ENCODE measurements at regions of chr13 and their contacts with region 1.

Region 1: DNA sequence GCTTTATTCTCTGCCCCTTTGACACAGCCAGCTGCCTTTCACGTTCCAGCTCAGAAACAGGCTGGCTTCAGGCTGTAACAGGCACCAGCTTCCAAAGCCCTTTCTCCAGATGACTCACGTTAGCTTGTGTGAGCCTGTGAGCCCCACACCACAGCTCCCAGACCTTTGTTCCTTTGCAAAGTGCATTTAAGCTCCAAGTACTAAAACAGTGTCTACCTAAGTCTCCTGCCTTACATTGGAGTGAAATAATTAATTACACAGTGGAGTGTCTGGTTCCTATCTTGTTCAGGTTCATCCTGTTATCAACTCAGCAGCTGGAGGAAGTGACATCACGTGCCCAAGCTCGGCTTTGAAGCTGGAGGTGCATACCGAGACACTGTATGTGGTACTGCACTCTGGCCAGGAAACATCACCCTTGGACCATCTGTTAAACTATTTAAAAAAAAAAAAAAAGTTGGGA is 475.8 kb downstream of the FOXO1 start:
- DNase-seq: peak; percentile 44 to 92 (median 74)
- ATAC-seq: peak; percentile 45
- H3K4me3 ChIP-seq: no peak overlapping the region
- H3K4me3 Mint-ChIP-seq: peak overlapping the region; percentile 80
- H3K27ac ChIP-seq: peak overlapping the region; percentile 60 to 71
- H3K27ac Mint-ChIP-seq: peak overlapping the region; percentile 99
- H3K4me1 ChIP-seq: peaks cover 65% of the 10 kb centered on the region
- H3K4me1 Mint-ChIP-seq: peaks cover 90% of the 10 kb centered on the region
- H3K27me3 ChIP-seq: no peaks in the 10 kb centered on the region
- H3K27me3 Mint-ChIP-seq: no peaks in the 10 kb centered on the region
- CTCF ChIP-seq: no peak

Region 2: DNA sequence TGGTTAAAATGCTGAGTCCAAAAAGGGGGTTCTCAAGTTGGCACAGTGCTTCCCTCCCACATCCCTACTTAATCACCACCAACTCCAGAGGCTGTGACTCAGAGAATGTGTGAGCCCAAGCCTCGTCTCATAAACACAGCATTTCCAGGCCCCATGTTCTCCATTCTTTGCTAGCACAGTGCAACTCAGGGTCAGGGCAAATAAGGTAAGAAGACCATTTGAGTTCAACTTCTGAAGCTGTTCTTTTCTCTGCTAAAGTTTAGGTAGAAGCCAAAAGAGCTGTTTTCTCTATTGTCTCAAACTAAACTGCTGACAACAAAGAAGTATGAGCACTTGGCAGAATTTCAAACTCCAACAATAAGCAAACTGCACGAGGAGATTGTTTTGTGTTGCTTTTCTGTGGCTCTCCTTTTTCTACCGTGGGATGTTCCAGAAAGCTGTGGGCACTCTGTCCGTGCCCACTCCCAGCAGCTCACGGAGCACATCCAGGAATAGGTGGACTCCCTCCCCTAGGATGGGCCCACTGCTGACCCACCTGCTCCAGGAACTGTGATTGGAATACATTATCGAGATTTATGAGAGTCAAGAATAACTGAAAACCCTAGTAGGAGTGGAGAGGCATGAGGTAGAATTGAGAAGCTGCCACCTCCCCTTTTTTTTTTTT is 40.9 kb before region 1 on chr13:
- CTCF ChIA-PET with region 1: no interaction called
- POLR2A ChIA-PET with region 1: interaction called, 11 read pairs
- intact Hi-C with region 1: loop called (anchors 2 kb)
- DNase-seq: no peak
- ATAC-seq: no peak
- H3K4me3 ChIP-seq: no peak overlapping the region
- H3K4me3 Mint-ChIP-seq: no peak overlapping the region
- H3K27ac ChIP-seq: no peak overlapping the region
- H3K27ac Mint-ChIP-seq: no peak overlapping the region
- H3K4me1 ChIP-seq: peaks cover 38% of the 10 kb centered on the region
- H3K4me1 Mint-ChIP-seq: peaks cover 79% of the 10 kb centered on the region
- H3K27me3 ChIP-seq: no peaks in the 10 kb centered on the region
- H3K27me3 Mint-ChIP-seq: no peaks in the 10 kb centered on the region
- CTCF ChIP-seq: no peak

Region 3: GRCh38 chr13:40178130-40178529 is 12.5 kb before region 1 on chr13:
- CTCF ChIA-PET with region 1: interaction called, 4 read pairs
- POLR2A ChIA-PET with region 1: interaction called, 16 read pairs
- intact Hi-C with region 1: no loop called
- DNase-seq: peak in 3 of 14 experiments; percentile 6 to 37 (median 31)
- ATAC-seq: peak; percentile 68
- H3K4me3 ChIP-seq: no peak overlapping the region
- H3K4me3 Mint-ChIP-seq: peak overlapping the region; percentile 74
- H3K27ac ChIP-seq: no peak overlapping the region
- H3K27ac Mint-ChIP-seq: peak overlapping the region; percentile 60
- H3K4me1 ChIP-seq: peaks cover 11% of the 10 kb centered on the region
- H3K4me1 Mint-ChIP-seq: peaks cover 58% of the 10 kb centered on the region
- H3K27me3 ChIP-seq: no peaks in the 10 kb centered on the region
- H3K27me3 Mint-ChIP-seq: no peaks in the 10 kb centered on the region
- CTCF ChIP-seq: no peak

Region 4: GRCh38 chr13:40221460-40222201 is 31.0 kb after region 1 on chr13:
- CTCF ChIA-PET with region 1: interaction called, 3 read pairs
- POLR2A ChIA-PET with region 1: interaction called, 9 read pairs
- intact Hi-C with region 1: loop called in 1 of 2 experiments (anchors 1 kb)
- DNase-seq: peak in 11 of 14 experiments; percentile 13 to 87 (median 40)
- ATAC-seq: peak; percentile 83
- H3K4me3 ChIP-seq: peak overlapping the region; percentile 19
- H3K4me3 Mint-ChIP-seq: peak overlapping the region; percentile 68
- H3K27ac ChIP-seq: peak overlapping the region in 1 of 2 donors; percentile 70
- H3K27ac Mint-ChIP-seq: peak overlapping the region; percentile 85
- H3K4me1 ChIP-seq: peaks cover 40% of the 10 kb centered on the region
- H3K4me1 Mint-ChIP-seq: peaks cover 48% of the 10 kb centered on the region
- H3K27me3 ChIP-seq: no peaks in the 10 kb centered on the region
- H3K27me3 Mint-ChIP-seq: no peaks in the 10 kb centered on the region
- CTCF ChIP-seq: no peak

Measured in CD4-positive, alpha-beta T cell (primary cell).